Activated CD4-positive, alpha-beta memory T cell treated with anti-CD3 and anti-CD28 coated beads, Interleukin-2, amount 10 ng/mL, durations not matched to agents 7 days and 5 days (primary cell): ENCODE measurements at regions of chr3 and their contacts with region 1.

Region 1: DNA sequence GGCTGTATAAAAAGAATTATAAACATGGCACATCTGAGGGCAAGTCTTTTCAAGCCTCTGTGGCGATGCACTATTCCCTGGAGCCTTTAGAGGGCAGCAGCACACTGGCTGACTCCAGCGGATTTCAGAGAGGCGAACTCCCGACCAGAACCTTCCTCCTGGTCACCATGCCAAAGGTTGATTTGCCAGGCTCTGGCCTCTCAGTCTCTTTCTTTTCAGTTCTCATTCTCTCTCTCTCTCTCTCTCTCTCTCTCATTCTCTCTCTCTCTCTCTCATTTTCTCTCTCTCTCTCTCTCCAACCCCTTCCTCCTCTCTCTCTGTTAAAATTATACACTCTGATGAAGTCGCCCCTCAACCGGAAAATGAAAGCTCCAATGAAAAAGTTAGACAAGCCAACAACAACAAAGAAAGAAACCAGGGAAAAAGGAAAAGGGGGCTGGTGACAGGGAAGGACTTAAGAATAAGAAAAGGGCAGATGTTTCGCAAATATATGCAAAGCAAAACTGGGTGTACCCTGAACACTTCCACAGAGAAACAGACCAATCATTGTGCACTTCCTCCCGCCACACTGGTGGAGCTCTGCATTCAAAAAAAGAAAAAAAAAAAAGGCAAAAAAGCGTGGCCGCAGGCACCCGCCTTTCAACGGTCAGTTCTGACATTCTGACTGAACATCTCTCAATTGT is 90.2 kb downstream of the TIGIT start:
- DNase-seq: peak; percentile 73
- H3K4me3 Mint-ChIP-seq: peak overlapping the region; percentile 61
- H3K27ac Mint-ChIP-seq: peak overlapping the region; percentile 57
- H3K4me1 Mint-ChIP-seq: peaks cover 9% of the 10 kb centered on the region
- H3K27me3 Mint-ChIP-seq: no peaks in the 10 kb centered on the region

Region 2: GRCh38 chr3:114152519-114153151 is 231.4 kb before region 1 on chr3:
- CTCF ChIA-PET with region 1: interaction called, 12 read pairs
- POLR2A ChIA-PET with region 1: no interaction called
- DNase-seq: peak; percentile 83
- H3K4me3 Mint-ChIP-seq: peak overlapping the region; percentile 55
- H3K27ac Mint-ChIP-seq: no peak overlapping the region
- H3K4me1 Mint-ChIP-seq: peaks cover 11% of the 10 kb centered on the region
- H3K27me3 Mint-ChIP-seq: peaks cover 2% of the 10 kb centered on the region

Region 3: GRCh38 chr3:114408736-114409670 is 25.0 kb after region 1 on chr3:
- CTCF ChIA-PET with region 1: interaction called, 10 read pairs
- POLR2A ChIA-PET with region 1: no interaction called
- DNase-seq: no peak
- H3K4me3 Mint-ChIP-seq: no peak overlapping the region
- H3K27ac Mint-ChIP-seq: no peak overlapping the region
- H3K4me1 Mint-ChIP-seq: peaks cover 16% of the 10 kb centered on the region
- H3K27me3 Mint-ChIP-seq: peaks cover 2% of the 10 kb centered on the region

Region 4: DNA sequence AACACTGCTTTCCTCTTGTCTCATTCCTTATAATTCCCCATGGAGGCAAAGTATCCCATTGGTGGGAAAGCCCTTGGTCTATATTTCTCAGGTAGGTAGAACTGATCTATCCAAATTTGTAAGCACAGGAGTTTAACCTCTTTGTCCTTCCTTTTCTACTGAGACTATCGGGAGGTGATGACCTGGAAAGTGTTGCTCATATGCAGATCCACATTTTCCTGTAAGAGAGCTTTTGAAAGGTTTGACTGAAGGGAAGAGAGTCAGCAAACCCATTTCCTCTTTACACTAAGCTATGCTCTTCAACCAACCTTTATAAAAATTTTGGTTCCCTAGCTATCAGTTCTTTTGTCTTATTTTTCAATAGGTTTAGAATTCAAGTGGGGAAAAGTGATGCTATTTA is 110.5 kb after region 1 on chr3:
- CTCF ChIA-PET with region 1: no interaction called
- POLR2A ChIA-PET with region 1: no interaction called
- DNase-seq: no peak
- H3K4me3 Mint-ChIP-seq: no peak overlapping the region
- H3K27ac Mint-ChIP-seq: no peak overlapping the region
- H3K4me1 Mint-ChIP-seq: peaks cover 4% of the 10 kb centered on the region
- H3K27me3 Mint-ChIP-seq: peaks cover 12% of the 10 kb centered on the region